Posterior cingulate gyrus (tissue), 11 donors: ENCODE measurements at regions of chr2 and their contacts with region 1.

Region 1: DNA sequence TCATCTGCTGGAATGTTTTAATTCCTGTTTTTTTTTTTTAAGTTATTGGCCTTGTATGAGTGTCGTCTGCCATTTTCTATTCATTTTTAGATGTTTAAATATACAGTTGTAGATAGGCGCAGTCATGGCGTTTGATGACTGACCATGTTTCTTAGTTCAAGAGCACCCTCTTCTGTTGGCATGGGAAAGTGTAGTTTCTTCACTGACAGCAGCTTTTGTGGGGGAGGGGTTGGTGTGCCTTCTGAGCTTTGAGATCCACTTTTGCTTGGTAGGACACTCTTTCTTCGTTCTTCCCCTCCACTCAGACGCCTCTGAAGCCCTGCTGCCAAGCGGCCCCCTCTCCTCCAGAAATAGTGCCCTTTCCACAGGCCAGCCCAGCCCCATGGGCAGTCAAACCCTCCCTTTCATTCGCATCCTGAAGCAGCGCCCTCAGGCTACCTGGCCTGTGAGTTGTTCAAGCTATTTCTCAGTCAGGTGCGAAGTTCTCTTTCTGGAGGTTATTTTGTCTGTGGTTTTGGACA is 492.0 kb downstream of the TNS1 start:
- DNase-seq: peak in 7 of 10 donors; percentile 29 to 87 (median 52)

Region 2: DNA sequence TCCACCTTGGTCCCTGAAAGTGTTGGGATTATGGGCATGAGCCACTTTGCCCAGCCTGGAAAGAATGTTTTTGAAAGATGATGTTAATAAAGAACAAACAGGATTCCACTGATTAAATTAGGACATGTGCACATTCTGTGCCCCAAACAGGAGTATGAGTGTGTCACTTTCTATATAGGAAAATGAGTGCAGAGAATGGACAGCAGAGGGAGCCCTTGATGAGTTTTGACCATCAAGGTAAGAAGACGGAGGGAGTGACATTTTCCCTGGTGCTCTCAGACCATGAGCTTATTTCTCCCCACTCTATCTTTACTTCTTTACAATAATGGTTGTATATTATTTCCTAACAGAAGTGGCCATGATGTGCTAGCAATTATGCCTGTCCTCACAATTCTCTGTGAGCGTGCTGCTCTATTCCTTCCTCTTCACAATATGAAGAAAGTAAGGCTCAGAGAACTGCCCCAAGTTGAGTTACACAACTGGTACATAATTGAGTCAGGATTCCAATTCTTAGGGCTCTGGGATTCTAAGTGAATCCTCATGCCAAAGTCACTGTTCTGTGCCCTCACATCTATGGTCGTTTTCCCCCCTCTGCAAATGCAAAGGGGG is 991.6 kb before region 1 on chr2:
- intact Hi-C with region 1: loop called (anchors 10 kb)
- DNase-seq: peak in 4 of 10 donors; percentile 26 to 59 (median 43)

Region 3: GRCh38 chr2:216683846-216684507 is 826.9 kb before region 1 on chr2:
- intact Hi-C with region 1: loop called (anchors 1 kb)
- DNase-seq: peak in 2 of 10 donors; percentile 42 to 85

Region 4: GRCh38 chr2:216698895-216699294 is 811.9 kb before region 1 on chr2:
- intact Hi-C with region 1: loop called (anchors 5 kb)
- DNase-seq: no peak

Region 5: DNA sequence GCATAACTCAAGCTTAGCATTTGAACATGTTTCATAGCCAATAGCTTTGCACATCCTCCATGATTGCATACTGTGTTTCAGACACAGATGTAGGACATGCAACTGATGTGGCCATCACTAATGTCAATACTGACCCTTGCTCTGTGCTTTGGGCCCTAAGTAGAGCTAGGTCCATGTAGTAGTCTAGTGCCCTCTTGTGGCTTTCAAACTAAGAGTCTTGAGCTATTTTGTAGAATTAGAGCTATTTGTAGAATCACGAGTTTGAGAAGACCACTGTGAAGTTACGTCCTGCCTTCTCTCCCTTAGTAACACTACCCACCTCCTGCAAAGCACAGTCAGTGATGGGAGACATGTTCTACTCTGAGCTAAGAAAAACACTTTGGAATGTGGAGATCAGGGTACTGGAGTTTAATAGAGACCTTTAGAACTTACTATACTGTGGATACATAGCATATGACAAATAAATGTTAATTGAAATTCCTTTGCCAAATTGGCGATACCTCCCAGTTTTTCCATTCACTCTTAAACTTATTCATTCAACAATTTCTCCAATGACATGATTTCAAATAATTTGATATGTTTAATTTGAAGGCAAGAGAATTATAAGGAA is 344.5 kb before region 1 on chr2:
- intact Hi-C with region 1: loop called (anchors 5 kb)
- DNase-seq: no peak